Mammary epithelial cell (primary cell): ENCODE measurements at regions of chr9 and their contacts with region 1.

Region 1: DNA sequence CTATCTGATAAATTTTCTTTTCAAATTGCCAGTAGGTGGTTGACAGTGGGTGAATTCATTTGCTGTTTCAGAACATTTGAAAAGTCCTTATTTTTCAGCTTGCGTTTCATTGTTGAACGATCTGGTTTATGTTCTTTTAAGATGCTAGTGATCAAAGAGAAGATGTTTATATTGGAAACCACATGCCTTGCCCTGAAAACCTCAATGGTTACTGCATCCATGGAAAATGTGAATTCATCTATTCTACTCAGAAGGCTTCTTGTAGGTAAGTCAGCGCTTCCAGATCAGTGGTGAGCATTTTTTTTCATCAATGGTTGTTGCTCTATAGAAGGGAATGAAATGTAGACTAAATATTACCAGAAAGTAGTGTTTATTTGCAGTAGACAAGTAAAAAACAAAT is 16.6 kb upstream of the CAVIN4 start:
- DNase-seq: no peak
- H3K4me3 ChIP-seq: no peak overlapping the region
- H3K27ac ChIP-seq: no peak overlapping the region
- H3K4me1 ChIP-seq: no peaks in the 10 kb centered on the region
- H3K27me3 ChIP-seq: no peaks in the 10 kb centered on the region
- CTCF ChIP-seq: no peak

Region 2: DNA sequence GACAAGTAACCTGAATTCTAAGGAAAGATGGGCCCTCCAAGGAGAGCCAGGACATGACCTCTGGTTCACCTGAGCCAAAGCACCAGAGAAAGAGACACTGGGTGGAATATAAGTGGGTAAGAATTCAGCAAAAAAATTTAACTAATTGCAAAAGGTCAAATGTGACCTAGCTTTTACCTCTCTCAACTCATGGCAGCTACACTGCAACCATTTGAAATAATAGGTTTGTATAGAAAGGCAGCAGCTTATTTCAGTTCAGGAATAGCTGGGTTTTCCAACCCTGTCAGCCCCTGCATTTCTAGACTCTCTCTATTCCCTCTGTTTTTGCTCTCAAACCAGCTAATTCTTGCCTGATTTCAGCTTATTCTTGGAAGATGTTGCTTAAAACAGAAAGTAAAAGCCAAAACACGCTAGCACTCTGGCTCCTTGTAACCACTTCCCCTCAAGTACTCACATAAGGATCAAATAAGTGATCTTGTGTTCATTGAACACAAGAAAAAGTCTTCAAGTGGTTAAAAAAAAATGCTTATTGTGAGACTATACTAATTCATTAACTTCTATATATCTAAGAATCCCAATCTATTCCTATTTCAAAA is 840.7 kb before region 1 on chr9:
- CTCF ChIA-PET with region 1: interaction called, 12 read pairs
- dilution Hi-C with region 1: no loop called
- in situ Hi-C with region 1: no loop called
- intact Hi-C with region 1: no loop called
- DNase-seq: no peak
- H3K4me3 ChIP-seq: no peak overlapping the region
- H3K27ac ChIP-seq: no peak overlapping the region
- H3K4me1 ChIP-seq: no peaks in the 10 kb centered on the region
- H3K27me3 ChIP-seq: no peaks in the 10 kb centered on the region
- CTCF ChIP-seq: no peak

Region 3: GRCh38 chr9:99762470-99762869 is 798.8 kb before region 1 on chr9:
- CTCF ChIA-PET with region 1: no interaction called
- dilution Hi-C with region 1: no loop called
- in situ Hi-C with region 1: no loop called
- intact Hi-C with region 1: no loop called
- DNase-seq: no peak
- H3K4me3 ChIP-seq: no peak overlapping the region
- H3K27ac ChIP-seq: no peak overlapping the region
- H3K4me1 ChIP-seq: no peaks in the 10 kb centered on the region
- H3K27me3 ChIP-seq: no peaks in the 10 kb centered on the region
- CTCF ChIP-seq: no peak